Activated CD4-positive, alpha-beta memory T cell treated with anti-CD3 and anti-CD28 coated beads, Interleukin-2, amount 10 ng/mL, durations not matched to agents 7 days and 5 days (primary cell): ENCODE measurements at regions of chr5 and their contacts with region 1.

Region 1: GRCh38 chr5:148740966-148741742 is 85.3 kb upstream of the ADRB2 start:
- DNase-seq: no peak
- H3K4me3 Mint-ChIP-seq: no peak overlapping the region
- H3K27ac Mint-ChIP-seq: no peak overlapping the region
- H3K4me1 Mint-ChIP-seq: peaks cover 10% of the 10 kb centered on the region
- H3K27me3 Mint-ChIP-seq: peaks cover 9% of the 10 kb centered on the region

Region 2: DNA sequence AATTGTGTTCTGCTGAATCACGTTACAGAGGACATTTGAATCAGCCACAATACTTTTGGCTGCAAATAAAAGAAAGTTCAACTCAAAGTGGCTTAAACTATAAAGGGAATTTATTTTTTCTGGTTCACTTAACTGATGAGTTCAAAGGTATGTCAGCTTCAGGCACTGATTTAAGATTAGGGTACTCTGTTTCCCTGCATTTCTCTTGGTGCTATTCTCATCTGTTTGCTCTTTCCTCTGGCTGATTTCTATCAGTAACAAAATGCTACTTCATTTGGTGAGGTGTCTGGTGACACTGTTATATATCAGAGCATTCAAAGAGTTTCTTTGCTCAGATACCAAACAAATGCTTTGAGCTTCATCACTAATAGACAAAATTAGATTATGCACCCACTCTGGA is 20.9 kb before region 1 on chr5:
- CTCF ChIA-PET with region 1: no interaction called
- POLR2A ChIA-PET with region 1: no interaction called
- DNase-seq: no peak
- H3K4me3 Mint-ChIP-seq: no peak overlapping the region
- H3K27ac Mint-ChIP-seq: no peak overlapping the region
- H3K4me1 Mint-ChIP-seq: no peaks in the 10 kb centered on the region
- H3K27me3 Mint-ChIP-seq: peaks cover 23% of the 10 kb centered on the region

Region 3: DNA sequence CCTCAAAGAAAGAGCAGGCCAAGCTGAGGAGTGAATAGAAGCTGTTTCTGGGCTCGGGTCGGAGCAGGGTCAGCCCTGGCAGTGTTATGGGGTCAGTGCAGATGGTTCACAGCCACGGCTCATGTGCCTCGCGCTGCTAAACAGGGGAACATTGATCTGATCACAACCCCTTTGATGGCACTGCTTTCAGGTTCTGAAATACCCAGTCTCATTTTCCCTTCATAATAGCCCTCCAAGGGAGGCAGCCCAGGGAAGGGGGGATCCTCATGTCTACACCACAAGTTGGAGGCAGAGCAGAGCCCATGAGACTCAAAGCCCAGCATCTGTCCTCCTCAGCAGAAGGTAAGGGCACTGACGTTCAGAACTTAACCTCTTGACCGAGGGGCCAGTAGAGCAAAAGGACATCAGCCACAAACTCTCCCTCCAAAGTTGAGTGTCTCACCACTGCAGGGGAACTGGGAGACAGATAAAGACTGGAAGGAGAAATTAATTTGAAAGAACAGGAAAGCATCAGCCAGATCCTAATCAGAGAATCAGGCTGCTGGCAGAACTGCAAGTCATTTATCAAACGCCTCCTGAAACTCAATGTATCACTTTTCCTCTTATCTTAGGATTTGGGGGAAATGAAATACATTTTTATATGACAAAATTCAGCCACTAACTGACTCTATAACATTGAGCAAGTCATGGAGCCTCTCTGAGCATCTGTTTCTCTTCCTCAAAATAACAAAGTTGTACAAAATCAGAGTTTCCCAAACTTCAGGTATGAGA is 211.1 kb after region 1 on chr5:
- CTCF ChIA-PET with region 1: interaction called, 69 read pairs
- POLR2A ChIA-PET with region 1: no interaction called
- DNase-seq: no peak
- H3K4me3 Mint-ChIP-seq: no peak overlapping the region
- H3K27ac Mint-ChIP-seq: no peak overlapping the region
- H3K4me1 Mint-ChIP-seq: no peaks in the 10 kb centered on the region
- H3K27me3 Mint-ChIP-seq: no peaks in the 10 kb centered on the region

Region 4: DNA sequence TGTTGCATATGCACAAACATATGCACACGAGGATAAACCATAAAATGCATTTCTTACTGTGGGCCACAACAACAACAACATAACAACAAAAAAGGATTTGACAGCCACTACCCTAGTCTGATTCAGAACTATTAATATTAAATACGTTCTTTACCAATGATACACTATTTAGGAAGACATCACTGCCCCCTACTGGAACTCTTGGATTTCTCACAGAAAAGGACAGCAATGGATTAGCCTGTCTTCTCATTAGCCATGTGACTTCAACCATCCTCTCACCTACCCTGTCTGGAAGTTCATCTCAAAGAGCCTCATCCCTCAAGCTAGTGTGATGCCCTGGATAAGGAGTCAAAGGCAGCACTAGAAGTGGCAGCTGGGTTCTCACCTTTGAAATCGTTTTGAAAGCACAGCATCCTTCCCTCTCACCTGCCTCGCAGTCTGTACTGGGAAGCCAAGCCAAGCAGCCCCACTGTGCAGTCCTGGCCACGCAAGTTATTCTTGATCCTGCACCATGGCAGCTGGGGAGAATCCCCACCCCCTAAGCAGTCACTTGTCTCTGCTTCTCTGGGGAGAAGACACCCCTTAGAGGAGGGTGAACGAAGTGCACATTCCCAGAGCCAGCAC is 257.1 kb after region 1 on chr5:
- CTCF ChIA-PET with region 1: interaction called, 48 read pairs
- POLR2A ChIA-PET with region 1: no interaction called
- DNase-seq: peak; percentile 23
- H3K4me3 Mint-ChIP-seq: no peak overlapping the region
- H3K27ac Mint-ChIP-seq: no peak overlapping the region
- H3K4me1 Mint-ChIP-seq: no peaks in the 10 kb centered on the region
- H3K27me3 Mint-ChIP-seq: peaks cover 34% of the 10 kb centered on the region